Ovary (tissue), 10 donors: ENCODE measurements at regions of chr10 and their contacts with region 1.

Region 1: GRCh38 chr10:94320285-94320914 is 42.3 kb downstream of the NOC3L start:
- DNase-seq: peak; percentile 55 to 78 (median 71)
- H3K4me3 ChIP-seq: no peak overlapping the region
- H3K27ac ChIP-seq: no peak overlapping the region
- H3K4me1 ChIP-seq: peaks cover 2% of the 10 kb centered on the region
- H3K27me3 ChIP-seq: no peaks in the 10 kb centered on the region
- CTCF ChIP-seq: peak; percentile 64 to 78 (median 78)
- EP300 ChIP-seq: no peak
- POLR2A ChIP-seq: no peak

Region 2: GRCh38 chr10:94069884-94070283 is 250.5 kb before region 1 on chr10:
- intact Hi-C with region 1: loop called in 3 of 4 experiments (anchors 5 to 10 kb)
- DNase-seq: no peak
- H3K4me3 ChIP-seq: no peak overlapping the region
- H3K27ac ChIP-seq: no peak overlapping the region
- H3K4me1 ChIP-seq: no peaks in the 10 kb centered on the region
- H3K27me3 ChIP-seq: no peaks in the 10 kb centered on the region
- CTCF ChIP-seq: no peak
- EP300 ChIP-seq: no peak
- POLR2A ChIP-seq: no peak

Region 3: GRCh38 chr10:94264085-94264484 is 56.3 kb before region 1 on chr10:
- intact Hi-C with region 1: no loop called
- DNase-seq: no peak
- H3K4me3 ChIP-seq: no peak overlapping the region
- H3K27ac ChIP-seq: no peak overlapping the region
- H3K4me1 ChIP-seq: no peaks in the 10 kb centered on the region
- H3K27me3 ChIP-seq: no peaks in the 10 kb centered on the region
- CTCF ChIP-seq: no peak
- EP300 ChIP-seq: no peak
- POLR2A ChIP-seq: no peak